ENCODE measurements at regions of chr1 and their contacts with region 1.

Region 1: GRCh38 chr1:63537940-63538339 is 14.6 kb downstream of the EFCAB7 start:
- DNase-seq: no peak
- H3K4me3 Mint-ChIP-seq: no peak overlapping the region
- H3K27ac Mint-ChIP-seq: no peak overlapping the region
- H3K4me1 Mint-ChIP-seq: no peaks in the 10 kb centered on the region
- H3K27me3 Mint-ChIP-seq: no peaks in the 10 kb centered on the region
- CTCF ChIP-seq: peak; percentile 42

Region 2: GRCh38 chr1:62841587-62842169 is 696.3 kb before region 1 on chr1:
- CTCF ChIA-PET with region 1: no interaction called
- intact Hi-C with region 1: loop called (anchors 5 kb)
- DNase-seq: peak; percentile 44
- H3K4me3 Mint-ChIP-seq: no peak overlapping the region
- H3K27ac Mint-ChIP-seq: no peak overlapping the region
- H3K4me1 Mint-ChIP-seq: no peaks in the 10 kb centered on the region
- H3K27me3 Mint-ChIP-seq: no peaks in the 10 kb centered on the region
- CTCF ChIP-seq: peak; percentile 64

Region 3: GRCh38 chr1:63004868-63005267 is 533.1 kb before region 1 on chr1:
- CTCF ChIA-PET with region 1: no interaction called
- intact Hi-C with region 1: loop called (anchors 10 kb)
- DNase-seq: peak; percentile 44
- H3K4me3 Mint-ChIP-seq: no peak overlapping the region
- H3K27ac Mint-ChIP-seq: no peak overlapping the region
- H3K4me1 Mint-ChIP-seq: no peaks in the 10 kb centered on the region
- H3K27me3 Mint-ChIP-seq: peaks cover 59% of the 10 kb centered on the region
- CTCF ChIP-seq: peak; percentile 37

Region 4: DNA sequence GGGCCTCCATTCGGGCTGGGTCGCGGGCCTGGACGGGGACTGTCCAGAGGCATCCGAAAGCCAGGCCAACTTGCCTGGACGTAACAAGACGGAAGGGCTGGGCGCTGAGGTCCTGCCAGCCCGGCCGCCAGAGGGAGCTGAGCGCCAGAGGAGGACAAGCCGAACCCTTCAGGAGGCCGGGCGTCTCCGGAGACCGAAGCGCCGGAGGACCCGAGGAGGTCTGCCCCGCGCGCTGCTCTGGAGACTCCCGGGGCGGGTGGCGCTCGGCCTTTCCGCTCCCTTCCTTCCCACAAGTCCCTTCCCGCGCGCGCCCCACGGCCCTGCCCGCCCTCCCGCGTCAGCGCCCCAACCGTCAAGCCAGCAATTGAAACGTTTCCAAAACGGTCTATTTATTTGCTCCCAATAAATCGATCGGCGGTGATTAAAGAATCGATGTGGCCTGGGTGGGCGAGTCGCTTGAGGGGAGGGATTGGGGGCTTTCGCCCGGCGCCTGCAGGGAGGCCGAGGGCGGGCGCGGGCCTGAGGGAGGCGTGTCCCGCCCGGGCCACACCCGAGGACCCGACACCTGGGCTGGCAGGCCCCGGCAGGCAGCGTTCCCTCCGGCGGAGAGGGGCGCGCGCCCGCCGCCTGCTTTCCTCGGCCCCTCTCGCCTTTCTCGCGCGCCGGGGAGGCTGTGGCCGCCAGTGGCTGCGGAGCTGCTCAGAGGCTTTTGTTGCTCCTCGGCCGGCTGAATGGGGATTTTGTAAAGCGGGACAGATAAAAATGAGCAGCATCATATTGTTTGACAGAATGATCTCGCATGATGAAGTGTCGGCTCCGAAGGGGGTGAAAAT is 220.7 kb before region 1 on chr1:
- CTCF ChIA-PET with region 1: interaction called, 3 read pairs
- intact Hi-C with region 1: loop called (anchors 5 kb)
- DNase-seq: peak; percentile 95
- H3K4me3 Mint-ChIP-seq: peak overlapping the region; percentile 66
- H3K27ac Mint-ChIP-seq: no peak overlapping the region
- H3K4me1 Mint-ChIP-seq: peaks cover 8% of the 10 kb centered on the region
- H3K27me3 Mint-ChIP-seq: peaks cover 22% of the 10 kb centered on the region
- CTCF ChIP-seq: peak; percentile 77

Region 5: GRCh38 chr1:63463248-63463647 is 74.7 kb before region 1 on chr1:
- CTCF ChIA-PET with region 1: interaction called, 3 read pairs
- intact Hi-C with region 1: loop called (anchors 5 kb)
- DNase-seq: no peak
- H3K4me3 Mint-ChIP-seq: no peak overlapping the region
- H3K27ac Mint-ChIP-seq: no peak overlapping the region
- H3K4me1 Mint-ChIP-seq: no peaks in the 10 kb centered on the region
- H3K27me3 Mint-ChIP-seq: no peaks in the 10 kb centered on the region
- CTCF ChIP-seq: no peak

Region 6: DNA sequence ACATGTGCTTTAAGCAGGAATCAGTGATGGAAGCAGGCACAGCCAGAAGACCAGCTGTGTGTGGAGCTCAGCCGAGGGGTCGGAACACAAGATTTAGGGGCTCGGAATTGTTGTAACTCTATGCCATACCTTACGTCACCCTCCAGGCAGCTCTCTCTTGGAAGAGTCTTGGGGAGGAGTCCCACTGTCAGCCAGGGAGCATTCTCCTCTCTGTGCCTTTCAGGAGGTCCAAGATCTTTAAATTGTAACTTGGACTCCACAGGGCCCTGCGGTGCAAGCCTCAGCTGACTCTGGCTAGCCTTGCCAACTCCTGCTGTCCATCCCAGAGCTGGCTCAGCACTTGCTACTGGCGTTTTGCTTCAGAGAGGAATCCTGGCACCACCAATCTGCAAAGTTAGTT is 209.5 kb after region 1 on chr1:
- CTCF ChIA-PET with region 1: no interaction called
- intact Hi-C with region 1: no loop called
- DNase-seq: no peak
- H3K4me3 Mint-ChIP-seq: no peak overlapping the region
- H3K27ac Mint-ChIP-seq: no peak overlapping the region
- H3K4me1 Mint-ChIP-seq: peaks cover 8% of the 10 kb centered on the region
- H3K27me3 Mint-ChIP-seq: no peaks in the 10 kb centered on the region
- CTCF ChIP-seq: no peak

Measured in Calu3 (cell line).